Right cardiac atrium (tissue), 5 donors: ENCODE measurements at regions of chr3 and their contacts with region 1.

Region 1: GRCh38 chr3:146072824-146073223 is 88.2 kb downstream of the PLOD2 start:
- DNase-seq: no peak
- ATAC-seq: no peak
- H3K4me3 ChIP-seq: no peak overlapping the region
- H3K27ac ChIP-seq: no peak overlapping the region
- H3K4me1 ChIP-seq: no peaks in the 10 kb centered on the region
- H3K27me3 ChIP-seq: no peaks in the 10 kb centered on the region

Region 2: GRCh38 chr3:146184616-146185015 is 111.8 kb after region 1 on chr3:
- intact Hi-C with region 1: loop called in 3 of 4 experiments (anchors 5 to 10 kb)
- DNase-seq: no peak
- ATAC-seq: no peak
- H3K4me3 ChIP-seq: no peak overlapping the region
- H3K27ac ChIP-seq: no peak overlapping the region
- H3K4me1 ChIP-seq: no peaks in the 10 kb centered on the region
- H3K27me3 ChIP-seq: no peaks in the 10 kb centered on the region